Prostate gland (tissue), 2 donors: ENCODE measurements at regions of chr17 and their contacts with region 1.

Region 1: GRCh38 chr17:42677008-42677857 is 439 bp upstream of the PLEKHH3 start:
- DNase-seq: peak; percentile 100
- H3K4me3 ChIP-seq: peak overlapping the region; percentile 62 to 72
- H3K27ac ChIP-seq: peak overlapping the region; percentile 98
- H3K4me1 ChIP-seq: peaks cover 11% of the 10 kb centered on the region
- H3K27me3 ChIP-seq: no peaks in the 10 kb centered on the region
- CTCF ChIP-seq: no peak
- POLR2A ChIP-seq: no peak

Region 2: DNA sequence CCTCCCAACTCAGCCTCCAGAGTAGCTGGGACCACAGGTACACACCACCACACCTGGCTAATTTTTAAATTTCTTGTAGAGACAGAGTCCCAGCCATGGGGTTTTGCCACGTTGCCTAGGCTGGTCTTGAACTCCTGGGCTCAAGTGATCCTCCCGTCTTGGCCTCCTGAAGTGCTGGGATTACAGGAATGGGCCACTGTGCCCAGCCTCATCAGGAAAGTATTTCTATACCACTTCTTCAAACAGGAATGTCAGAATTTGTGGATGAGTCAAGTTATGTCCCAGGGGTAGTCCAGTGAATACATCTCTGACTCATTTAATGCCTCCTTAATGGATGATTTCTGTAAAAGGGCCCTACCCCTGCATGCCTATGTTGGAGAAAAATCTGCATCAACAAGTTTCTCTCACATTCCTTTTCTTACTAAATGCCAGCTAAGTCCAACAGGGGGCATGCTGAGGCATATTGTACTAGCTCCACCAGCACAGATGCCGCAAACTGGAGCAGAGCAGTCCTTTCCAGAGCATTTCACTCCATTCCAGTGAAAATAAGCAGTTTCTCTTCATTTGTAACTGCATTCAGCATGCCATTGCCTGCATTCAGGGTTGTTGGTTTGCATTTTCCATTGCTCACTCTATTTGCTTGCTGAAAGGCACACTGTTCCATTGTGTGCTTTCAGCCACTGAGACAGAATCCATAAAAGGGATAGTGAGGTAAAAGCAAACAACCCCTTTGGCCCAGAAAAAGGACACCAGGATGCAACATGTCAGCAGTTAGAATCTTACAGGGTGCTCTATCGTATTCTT is 248.9 kb before region 1 on chr17:
- intact Hi-C with region 1: loop called (anchors 10 kb)
- DNase-seq: peak; percentile 70
- H3K4me3 ChIP-seq: no peak overlapping the region
- H3K27ac ChIP-seq: peak overlapping the region; percentile 75 to 86
- H3K4me1 ChIP-seq: peaks cover 4% of the 10 kb centered on the region
- H3K27me3 ChIP-seq: no peaks in the 10 kb centered on the region
- CTCF ChIP-seq: peak in 3 of 4 experiments; percentile 40 to 72 (median 65)
- POLR2A ChIP-seq: no peak

Region 3: DNA sequence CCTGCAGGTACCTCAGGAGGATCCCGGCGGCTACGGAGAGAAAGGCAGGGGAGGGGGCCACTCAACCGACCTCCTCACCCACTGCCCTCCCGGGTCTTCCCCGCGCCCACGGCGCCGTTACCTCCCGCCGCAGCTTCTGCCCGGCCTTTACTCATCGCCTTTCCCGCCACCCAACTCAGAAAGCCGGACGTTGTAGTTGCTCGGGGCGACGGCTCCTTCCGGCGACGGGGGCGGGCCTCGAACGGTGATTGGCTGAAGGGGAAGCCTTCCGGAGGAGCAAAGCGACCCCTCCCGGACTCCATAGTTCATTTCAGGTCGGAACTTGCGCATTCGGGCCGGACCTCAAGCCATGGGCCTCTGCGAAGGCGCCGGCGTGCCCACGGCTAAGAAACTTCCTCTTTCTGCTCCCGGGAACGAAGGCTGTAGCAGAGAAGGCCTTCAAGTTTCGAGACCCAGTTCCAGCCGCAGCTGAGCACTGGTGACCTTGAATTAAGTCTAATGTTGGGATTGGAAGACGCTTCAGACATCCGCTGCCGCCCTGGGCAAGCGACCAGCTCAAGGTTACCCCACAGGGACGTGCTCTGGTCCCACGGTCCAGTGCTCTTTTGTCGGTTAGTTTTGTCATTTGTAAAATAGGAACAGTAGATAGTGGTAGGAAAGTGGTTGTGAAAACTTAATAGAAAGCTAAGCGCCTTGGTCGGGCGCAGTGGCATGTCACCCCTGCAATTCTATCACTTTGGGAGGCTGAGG is 99.5 kb before region 1 on chr17 and contains the start of gene PSMC3IP:
- intact Hi-C with region 1: loop called (anchors 1 kb)
- DNase-seq: peak; percentile 95
- H3K4me3 ChIP-seq: peak within 1 kb of the TSS; percentile 54 to 58
- H3K27ac ChIP-seq: peak within 1 kb of the TSS; percentile 83 to 86
- H3K4me1 ChIP-seq: peaks cover 7% of the 10 kb centered on the region
- H3K27me3 ChIP-seq: no peaks in the 10 kb centered on the region
- CTCF ChIP-seq: peak in 3 of 4 experiments; percentile 33 to 72 (median 60)
- POLR2A ChIP-seq: peak; percentile 69
- total RNA-seq, gene PSMC3IP: 2.9 to 11.2 TPM

Region 4: DNA sequence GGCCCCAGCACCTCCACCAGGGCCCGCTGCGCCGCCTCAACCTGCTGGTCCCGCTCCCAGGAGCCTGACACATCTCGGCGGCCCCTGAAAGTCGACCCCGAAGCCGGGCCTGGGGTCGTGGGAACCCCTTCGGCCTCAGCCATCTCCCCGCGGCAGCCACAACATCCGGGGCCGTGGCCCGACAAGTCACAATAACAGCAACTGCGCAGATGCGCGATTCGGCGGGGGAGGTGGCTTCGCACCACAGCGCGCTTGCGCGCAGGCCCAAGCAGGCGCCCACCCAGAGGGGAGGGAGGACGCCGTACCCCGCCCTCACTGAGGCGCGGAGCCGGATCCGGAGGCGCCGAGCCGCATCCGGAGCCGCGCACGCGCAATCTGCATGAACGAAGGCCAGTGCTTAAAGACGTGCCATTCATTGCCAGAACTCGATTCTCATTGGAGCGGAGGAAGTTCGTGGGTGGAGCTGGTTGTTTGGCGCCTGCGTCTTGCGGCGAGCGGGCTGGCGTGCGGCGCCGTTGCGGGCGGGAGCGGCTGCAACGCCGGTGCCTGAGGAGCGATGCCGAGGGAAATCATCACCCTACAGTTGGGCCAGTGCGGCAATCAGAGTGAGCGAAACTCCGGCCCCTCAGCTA is 67.9 kb before region 1 on chr17 and contains the starts of genes RETREG3 and TUBG1:
- intact Hi-C with region 1: loop called (anchors 5 kb)
- DNase-seq: peak; percentile 98
- H3K4me3 ChIP-seq: peak within 1 kb of the TSS; percentile 70 to 85
- H3K27ac ChIP-seq: peak within 1 kb of the TSS; percentile 92 to 93
- H3K4me1 ChIP-seq: no peaks in the 10 kb centered on the region
- H3K27me3 ChIP-seq: no peaks in the 10 kb centered on the region
- CTCF ChIP-seq: peak in 2 of 4 experiments; percentile 33 to 45
- POLR2A ChIP-seq: peak; percentile 96
- total RNA-seq, gene RETREG3: 92.8 to 126 TPM
- total RNA-seq, gene TUBG1: 38.7 to 78.4 TPM

Region 5: GRCh38 chr17:42743595-42744282 is 66.5 kb after region 1 on chr17:
- intact Hi-C with region 1: no loop called
- DNase-seq: no peak
- H3K4me3 ChIP-seq: peak overlapping the region; percentile 70 to 73
- H3K27ac ChIP-seq: peak overlapping the region; percentile 96 to 97
- H3K4me1 ChIP-seq: peaks cover 10% of the 10 kb centered on the region
- H3K27me3 ChIP-seq: no peaks in the 10 kb centered on the region
- CTCF ChIP-seq: no peak
- POLR2A ChIP-seq: no peak

Region 6: GRCh38 chr17:42886283-42887176 is 209.3 kb after region 1 on chr17:
- intact Hi-C with region 1: no loop called
- DNase-seq: no peak
- H3K4me3 ChIP-seq: no peak overlapping the region
- H3K27ac ChIP-seq: no peak overlapping the region
- H3K4me1 ChIP-seq: no peaks in the 10 kb centered on the region
- H3K27me3 ChIP-seq: no peaks in the 10 kb centered on the region
- CTCF ChIP-seq: no peak
- POLR2A ChIP-seq: no peak

Region 7: GRCh38 chr17:42898147-42898807 is 221.0 kb after region 1 on chr17:
- intact Hi-C with region 1: no loop called
- DNase-seq: no peak
- H3K4me3 ChIP-seq: no peak overlapping the region
- H3K27ac ChIP-seq: no peak overlapping the region
- H3K4me1 ChIP-seq: no peaks in the 10 kb centered on the region
- H3K27me3 ChIP-seq: no peaks in the 10 kb centered on the region
- CTCF ChIP-seq: no peak
- POLR2A ChIP-seq: no peak